Naive thymus-derived CD4-positive, alpha-beta T cell (primary cell): ENCODE measurements at regions of chr10 and their contacts with region 1.

Region 1: DNA sequence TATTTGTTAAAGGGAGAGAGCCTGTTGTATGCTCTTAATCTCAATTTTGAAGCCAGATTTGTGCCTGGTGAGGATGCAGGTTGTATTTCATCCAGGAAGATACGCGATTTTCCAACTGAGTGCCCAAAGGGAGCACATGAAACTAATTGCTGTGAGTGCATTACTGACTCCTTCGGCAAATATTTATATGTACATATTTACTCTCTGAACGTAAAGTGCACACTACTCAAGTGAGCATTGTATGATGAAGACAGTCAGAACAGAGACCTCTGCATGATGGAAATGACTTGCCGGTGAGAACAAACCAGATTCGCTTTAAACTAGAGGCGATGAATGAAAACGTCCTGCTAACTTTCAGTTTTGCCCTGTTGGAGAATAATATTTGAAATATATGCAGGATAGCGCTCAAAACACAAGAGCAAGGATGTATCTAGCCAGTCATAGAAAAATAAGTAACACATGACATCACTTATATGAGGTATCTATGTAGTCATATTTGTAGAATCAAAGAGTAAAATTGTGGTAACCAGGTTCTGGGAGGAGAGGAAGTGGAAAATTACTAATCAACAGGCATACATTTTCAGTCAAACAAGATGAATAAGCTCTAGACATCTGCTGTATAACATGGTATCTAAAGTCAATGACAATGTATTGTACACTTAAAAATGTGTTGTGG is 130.2 kb downstream of the MALRD1 start:
- DNase-seq: no peak
- ATAC-seq: no peak
- H3K4me3 ChIP-seq: no peak overlapping the region
- H3K4me3 Mint-ChIP-seq: no peak overlapping the region
- H3K27ac ChIP-seq: no peak overlapping the region
- H3K27ac Mint-ChIP-seq: no peak overlapping the region
- H3K4me1 ChIP-seq: no peaks in the 10 kb centered on the region
- H3K4me1 Mint-ChIP-seq: no peaks in the 10 kb centered on the region
- H3K27me3 ChIP-seq: no peaks in the 10 kb centered on the region
- H3K27me3 Mint-ChIP-seq: no peaks in the 10 kb centered on the region

Region 2: GRCh38 chr10:17290226-17290625 is 1888.6 kb before region 1 on chr10:
- CTCF ChIA-PET with region 1: no interaction called
- POLR2A ChIA-PET with region 1: no interaction called
- intact Hi-C with region 1: no loop called
- DNase-seq: peak in 6 of 9 donors; percentile 18 to 46 (median 30)
- ATAC-seq: peak; percentile 34
- H3K4me3 ChIP-seq: no peak overlapping the region
- H3K4me3 Mint-ChIP-seq: no peak overlapping the region
- H3K27ac ChIP-seq: no peak overlapping the region
- H3K27ac Mint-ChIP-seq: no peak overlapping the region
- H3K4me1 ChIP-seq: no peaks in the 10 kb centered on the region
- H3K4me1 Mint-ChIP-seq: peaks cover 0 to 8% (median 4%) of the 10 kb centered on the region in 7 donors
- H3K27me3 ChIP-seq: no peaks in the 10 kb centered on the region
- H3K27me3 Mint-ChIP-seq: peaks cover 0 to 24% (median 18%) of the 10 kb centered on the region in 5 donors

Region 3: GRCh38 chr10:18955061-18955460 is 223.8 kb before region 1 on chr10:
- CTCF ChIA-PET with region 1: no interaction called
- POLR2A ChIA-PET with region 1: no interaction called
- intact Hi-C with region 1: no loop called
- DNase-seq: no peak
- ATAC-seq: no peak
- H3K4me3 ChIP-seq: no peak overlapping the region
- H3K4me3 Mint-ChIP-seq: no peak overlapping the region
- H3K27ac ChIP-seq: no peak overlapping the region
- H3K27ac Mint-ChIP-seq: no peak overlapping the region
- H3K4me1 ChIP-seq: no peaks in the 10 kb centered on the region
- H3K4me1 Mint-ChIP-seq: no peaks in the 10 kb centered on the region
- H3K27me3 ChIP-seq: no peaks in the 10 kb centered on the region
- H3K27me3 Mint-ChIP-seq: no peaks in the 10 kb centered on the region

Region 4: GRCh38 chr10:18976696-18977251 is 202.0 kb before region 1 on chr10:
- CTCF ChIA-PET with region 1: no interaction called
- POLR2A ChIA-PET with region 1: no interaction called
- intact Hi-C with region 1: no loop called
- DNase-seq: no peak
- ATAC-seq: no peak
- H3K4me3 ChIP-seq: no peak overlapping the region
- H3K4me3 Mint-ChIP-seq: no peak overlapping the region
- H3K27ac ChIP-seq: no peak overlapping the region
- H3K27ac Mint-ChIP-seq: no peak overlapping the region
- H3K4me1 ChIP-seq: no peaks in the 10 kb centered on the region
- H3K4me1 Mint-ChIP-seq: no peaks in the 10 kb centered on the region
- H3K27me3 ChIP-seq: no peaks in the 10 kb centered on the region
- H3K27me3 Mint-ChIP-seq: no peaks in the 10 kb centered on the region

Region 5: GRCh38 chr10:19385846-19386465 is 207.1 kb after region 1 on chr10:
- CTCF ChIA-PET with region 1: no interaction called
- POLR2A ChIA-PET with region 1: no interaction called
- intact Hi-C with region 1: no loop called
- DNase-seq: no peak
- ATAC-seq: no peak
- H3K4me3 ChIP-seq: no peak overlapping the region
- H3K4me3 Mint-ChIP-seq: no peak overlapping the region
- H3K27ac ChIP-seq: no peak overlapping the region
- H3K27ac Mint-ChIP-seq: no peak overlapping the region
- H3K4me1 ChIP-seq: no peaks in the 10 kb centered on the region
- H3K4me1 Mint-ChIP-seq: no peaks in the 10 kb centered on the region
- H3K27me3 ChIP-seq: no peaks in the 10 kb centered on the region
- H3K27me3 Mint-ChIP-seq: no peaks in the 10 kb centered on the region

Region 6: DNA sequence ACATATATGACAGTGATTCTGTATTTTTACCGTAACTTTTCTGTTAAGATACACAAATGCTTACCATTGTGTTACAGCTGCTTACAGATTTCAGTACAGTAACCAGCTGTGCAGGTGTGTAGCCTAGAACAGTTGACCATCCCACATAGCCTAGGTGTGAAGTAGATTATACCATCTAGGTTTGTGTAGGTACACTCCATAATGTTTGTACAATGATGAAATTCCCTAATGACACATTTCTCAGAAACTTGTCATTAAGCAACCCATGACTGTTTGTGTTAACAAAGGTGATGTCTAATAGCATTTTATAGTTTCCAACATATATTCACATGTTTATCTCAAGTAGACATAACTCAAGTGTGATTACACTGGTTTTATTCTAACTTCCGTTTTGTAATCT is 855.9 kb after region 1 on chr10:
- CTCF ChIA-PET with region 1: no interaction called
- POLR2A ChIA-PET with region 1: interaction called, 10 read pairs
- intact Hi-C with region 1: no loop called
- DNase-seq: no peak
- ATAC-seq: no peak
- H3K4me3 ChIP-seq: no peak overlapping the region
- H3K4me3 Mint-ChIP-seq: no peak overlapping the region
- H3K27ac ChIP-seq: no peak overlapping the region
- H3K27ac Mint-ChIP-seq: no peak overlapping the region
- H3K4me1 ChIP-seq: no peaks in the 10 kb centered on the region
- H3K4me1 Mint-ChIP-seq: no peaks in the 10 kb centered on the region
- H3K27me3 ChIP-seq: no peaks in the 10 kb centered on the region
- H3K27me3 Mint-ChIP-seq: no peaks in the 10 kb centered on the region